H1 (cell line): ENCODE measurements at regions of chr7 and their contacts with region 1.

Region 1: DNA sequence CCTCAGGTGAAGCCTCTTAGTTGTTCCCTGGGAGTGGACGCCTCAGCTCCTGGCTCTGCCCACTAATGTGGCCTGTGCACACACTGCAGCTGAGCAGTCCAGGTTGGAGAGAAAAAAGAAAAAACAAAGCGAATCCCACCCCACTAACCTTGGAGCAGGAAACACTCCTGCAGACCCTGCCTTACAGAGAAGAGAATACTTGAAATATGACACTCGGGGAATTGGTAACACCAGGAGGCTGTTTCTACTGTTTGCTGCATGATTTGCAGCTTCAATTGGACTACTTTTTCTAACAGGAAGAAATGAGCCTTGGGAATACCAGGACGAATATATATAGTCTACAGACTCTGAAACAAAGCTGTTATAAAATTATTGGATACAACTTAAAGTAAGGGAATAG is 22.2 kb downstream of the CDHR3 start:
- DNase-seq: no peak
- H3K4me3 ChIP-seq: no peak overlapping the region
- H3K27ac ChIP-seq: no peak overlapping the region
- H3K4me1 ChIP-seq: peaks cover 8 to 35% (median 32%) of the 10 kb centered on the region in 4 experiments
- H3K27me3 ChIP-seq: no peaks in the 10 kb centered on the region
- CTCF ChIP-seq: no peak
- EP300 ChIP-seq: no peak
- POLR2A ChIP-seq: no peak
- RAD21 ChIP-seq: no peak

Region 2: GRCh38 chr7:105816266-105816828 is 168.9 kb before region 1 on chr7:
- CTCF ChIA-PET with region 1: no interaction called
- POLR2A ChIA-PET with region 1: no interaction called
- DNase-seq: no peak
- H3K4me3 ChIP-seq: no peak overlapping the region
- H3K27ac ChIP-seq: no peak overlapping the region
- H3K4me1 ChIP-seq: peaks cover 0 to 3% (median 0%) of the 10 kb centered on the region in 4 experiments; a peak in 3 of 7 replicates
- H3K27me3 ChIP-seq: no peaks in the 10 kb centered on the region
- CTCF ChIP-seq: no peak
- EP300 ChIP-seq: no peak
- POLR2A ChIP-seq: no peak
- RAD21 ChIP-seq: no peak

Region 3: DNA sequence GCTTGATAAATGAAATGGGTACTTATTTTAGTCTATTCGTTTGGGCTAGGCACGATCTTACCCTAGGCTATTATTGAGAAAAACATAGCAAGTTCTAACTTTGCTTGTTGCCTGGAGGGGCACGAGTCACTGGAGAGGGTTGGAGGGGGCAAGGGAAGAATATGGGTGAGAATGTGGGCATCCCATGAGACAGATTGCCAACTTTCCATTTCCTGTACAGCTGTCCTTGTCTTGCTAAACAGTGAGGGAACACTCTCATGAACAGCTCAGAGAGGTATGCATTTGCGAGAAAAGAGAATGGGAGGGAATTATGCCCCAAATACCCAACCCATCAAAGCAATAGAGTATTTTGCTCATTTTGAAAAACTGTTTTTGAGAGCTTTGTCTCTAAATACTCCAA is 13.0 kb before region 1 on chr7:
- CTCF ChIA-PET with region 1: interaction called, 15 read pairs
- POLR2A ChIA-PET with region 1: interaction called, 5 read pairs
- DNase-seq: no peak
- H3K4me3 ChIP-seq: no peak overlapping the region
- H3K27ac ChIP-seq: no peak overlapping the region
- H3K4me1 ChIP-seq: peaks cover 0 to 10% (median 4%) of the 10 kb centered on the region in 4 experiments; a peak in 3 of 7 replicates
- H3K27me3 ChIP-seq: no peaks in the 10 kb centered on the region
- CTCF ChIP-seq: no peak
- EP300 ChIP-seq: no peak
- POLR2A ChIP-seq: no peak
- RAD21 ChIP-seq: no peak